ENCODE measurements at regions of chr11 and their contacts with region 1.

Region 1: GRCh38 chr11:36478700-36479329 is 31.3 kb downstream of the TRAF6 start:
- DNase-seq: no peak
- H3K4me3 ChIP-seq: no peak overlapping the region
- H3K27ac ChIP-seq: no peak overlapping the region
- H3K4me1 ChIP-seq: no peaks in the 10 kb centered on the region
- H3K27me3 ChIP-seq: no peaks in the 10 kb centered on the region
- CTCF ChIP-seq: peak in 2 of 3 experiments; percentile 62 to 71; a peak in 3 of 4 replicates
- EP300 ChIP-seq: no peak
- POLR2A ChIP-seq: no peak
- RAD21 ChIP-seq: peak; percentile 90 to 92

Region 2: DNA sequence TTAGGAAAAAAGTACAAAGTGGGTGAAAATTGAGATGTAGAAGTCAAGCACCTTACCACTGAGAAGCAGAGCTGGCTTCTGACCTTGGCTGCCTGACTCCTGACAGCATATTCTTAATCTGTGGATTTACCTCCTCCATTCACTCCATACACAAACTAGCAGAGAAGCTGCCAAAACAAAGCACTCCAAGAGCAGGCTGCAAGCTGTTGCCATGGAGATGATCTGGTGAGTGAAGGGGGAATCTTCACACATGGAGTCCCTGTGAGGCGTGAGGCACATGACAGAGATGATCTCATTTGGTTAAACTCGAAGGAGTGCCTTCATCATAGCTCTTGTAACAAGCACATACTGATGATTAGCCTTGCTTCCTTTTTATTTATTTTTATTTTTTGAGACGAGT is 205.7 kb before region 1 on chr11:
- CTCF ChIA-PET with region 1: interaction called, 34 read pairs
- POLR2A ChIA-PET with region 1: no interaction called
- DNase-seq: no peak
- H3K4me3 ChIP-seq: no peak overlapping the region
- H3K27ac ChIP-seq: no peak overlapping the region
- H3K4me1 ChIP-seq: no peaks in the 10 kb centered on the region
- H3K27me3 ChIP-seq: no peaks in the 10 kb centered on the region
- CTCF ChIP-seq: no peak
- EP300 ChIP-seq: no peak
- POLR2A ChIP-seq: no peak
- RAD21 ChIP-seq: no peak

Region 3: DNA sequence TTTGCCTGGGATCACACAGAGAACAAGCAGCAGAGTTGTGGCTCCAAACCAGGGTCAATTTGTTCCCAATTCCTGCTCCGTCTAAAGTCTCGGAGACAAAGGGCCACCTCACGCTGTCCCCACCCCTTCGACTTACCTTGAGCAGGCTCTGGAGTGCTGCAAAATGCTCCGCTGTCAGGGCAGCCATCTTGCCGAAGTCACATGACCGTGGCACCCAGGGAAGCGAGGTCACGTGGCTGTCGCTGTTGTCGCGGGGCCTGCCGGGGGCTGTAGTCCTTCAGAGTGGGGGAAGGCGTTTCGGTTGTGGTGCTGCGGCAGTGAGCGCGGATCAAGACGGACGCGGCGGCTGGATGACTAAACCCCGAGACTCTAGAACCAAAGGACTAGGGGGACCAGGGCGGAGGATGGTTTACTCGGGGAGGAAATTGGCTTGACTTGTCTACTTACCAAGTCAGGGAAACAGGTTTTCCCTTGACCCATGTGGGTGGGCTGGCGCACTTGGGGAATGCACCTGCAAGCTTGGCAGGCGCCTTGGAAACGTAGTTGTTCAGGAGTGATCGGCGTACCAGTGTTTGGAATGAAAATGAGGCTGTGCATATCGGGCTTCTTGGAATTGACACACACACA is 189.5 kb before region 1 on chr11 and contains the start of gene COMMD9:
- CTCF ChIA-PET with region 1: interaction called, 152 read pairs
- POLR2A ChIA-PET with region 1: interaction called, 5 read pairs
- DNase-seq: peak; percentile 88 to 93
- H3K4me3 ChIP-seq: peak within 1 kb of the TSS; percentile 80 to 92 (median 88)
- H3K27ac ChIP-seq: no peak within 1 kb of the TSS
- H3K4me1 ChIP-seq: peaks cover 0 to 3% (median 0%) of the 10 kb centered on the region in 4 experiments; a peak in 4 of 7 replicates
- H3K27me3 ChIP-seq: peaks cover 0 to 5% (median 0%) of the 10 kb centered on the region in 4 experiments; a peak in 1 of 7 replicates
- CTCF ChIP-seq: no peak
- EP300 ChIP-seq: peak in 1 of 2 experiments; percentile 64; a peak in 1 of 3 replicates
- POLR2A ChIP-seq: peak; percentile 50 to 88
- RAD21 ChIP-seq: no peak
- total RNA-seq, gene COMMD9: 43.3 and 49.1 TPM in 2 replicates

Region 4: GRCh38 chr11:36306888-36307287 is 171.9 kb before region 1 on chr11:
- CTCF ChIA-PET with region 1: interaction called, 10 read pairs
- POLR2A ChIA-PET with region 1: no interaction called
- DNase-seq: no peak
- H3K4me3 ChIP-seq: no peak overlapping the region
- H3K27ac ChIP-seq: no peak overlapping the region
- H3K4me1 ChIP-seq: no peaks in the 10 kb centered on the region
- H3K27me3 ChIP-seq: no peaks in the 10 kb centered on the region
- CTCF ChIP-seq: peak in 2 of 3 experiments; percentile 58; a peak in 3 of 4 replicates
- EP300 ChIP-seq: no peak
- POLR2A ChIP-seq: no peak
- RAD21 ChIP-seq: peak; percentile 70 to 75

Region 5: GRCh38 chr11:36376888-36377758 is 101.7 kb before region 1 on chr11:
- CTCF ChIA-PET with region 1: interaction called, 17 read pairs
- POLR2A ChIA-PET with region 1: no interaction called
- DNase-seq: peak; percentile 56 to 86
- H3K4me3 ChIP-seq: peak overlapping the region; percentile 81 to 98 (median 84)
- H3K27ac ChIP-seq: no peak overlapping the region
- H3K4me1 ChIP-seq: peaks cover 0 to 3% (median 1%) of the 10 kb centered on the region in 4 experiments; a peak in 1 of 7 replicates
- H3K27me3 ChIP-seq: peaks cover 4 to 23% (median 17%) of the 10 kb centered on the region in 4 experiments
- CTCF ChIP-seq: peak; percentile 56 to 58 (median 57)
- EP300 ChIP-seq: no peak
- POLR2A ChIP-seq: peak in 1 of 2 experiments; percentile 18; a peak in 1 of 3 replicates
- RAD21 ChIP-seq: peak; percentile 26 to 47

Region 6: GRCh38 chr11:36492724-36493304 is 14.0 kb after region 1 on chr11:
- CTCF ChIA-PET with region 1: interaction called, 45 read pairs
- POLR2A ChIA-PET with region 1: interaction called, 3 read pairs
- DNase-seq: no peak
- H3K4me3 ChIP-seq: no peak overlapping the region
- H3K27ac ChIP-seq: no peak overlapping the region
- H3K4me1 ChIP-seq: no peaks in the 10 kb centered on the region
- H3K27me3 ChIP-seq: no peaks in the 10 kb centered on the region
- CTCF ChIP-seq: peak in 2 of 3 experiments; percentile 49 to 74; a peak in 2 of 4 replicates
- EP300 ChIP-seq: no peak
- POLR2A ChIP-seq: no peak
- RAD21 ChIP-seq: peak; percentile 75 to 76

Region 7: GRCh38 chr11:36865846-36866245 is 387.0 kb after region 1 on chr11:
- CTCF ChIA-PET with region 1: no interaction called
- POLR2A ChIA-PET with region 1: no interaction called
- DNase-seq: no peak
- H3K4me3 ChIP-seq: no peak overlapping the region
- H3K27ac ChIP-seq: no peak overlapping the region
- H3K4me1 ChIP-seq: no peaks in the 10 kb centered on the region
- H3K27me3 ChIP-seq: no peaks in the 10 kb centered on the region
- CTCF ChIP-seq: no peak
- EP300 ChIP-seq: no peak
- POLR2A ChIP-seq: no peak
- RAD21 ChIP-seq: no peak

Measured in H1 (cell line).